Thyroid gland (tissue), 4 donors: ENCODE measurements at regions of chr17 and their contacts with region 1.

Region 1: GRCh38 chr17:31216053-31216751 is 80.8 kb downstream of the OMG start:
- DNase-seq: no peak
- H3K4me3 ChIP-seq: no peak overlapping the region
- H3K27ac ChIP-seq: peak overlapping the region in 2 of 3 donors; percentile 3 to 21
- H3K4me1 ChIP-seq: peaks cover 0 to 4% of the 10 kb centered on the region in 2 donors
- H3K27me3 ChIP-seq: no peaks in the 10 kb centered on the region
- CTCF ChIP-seq: peak; percentile 27 to 74 (median 48)
- POLR2A ChIP-seq: no peak

Region 2: GRCh38 chr17:30894236-30894635 is 322.0 kb before region 1 on chr17:
- intact Hi-C with region 1: no loop called
- DNase-seq: no peak
- H3K4me3 ChIP-seq: no peak overlapping the region
- H3K27ac ChIP-seq: no peak overlapping the region
- H3K4me1 ChIP-seq: no peaks in the 10 kb centered on the region
- H3K27me3 ChIP-seq: no peaks in the 10 kb centered on the region
- CTCF ChIP-seq: no peak
- POLR2A ChIP-seq: no peak

Region 3: DNA sequence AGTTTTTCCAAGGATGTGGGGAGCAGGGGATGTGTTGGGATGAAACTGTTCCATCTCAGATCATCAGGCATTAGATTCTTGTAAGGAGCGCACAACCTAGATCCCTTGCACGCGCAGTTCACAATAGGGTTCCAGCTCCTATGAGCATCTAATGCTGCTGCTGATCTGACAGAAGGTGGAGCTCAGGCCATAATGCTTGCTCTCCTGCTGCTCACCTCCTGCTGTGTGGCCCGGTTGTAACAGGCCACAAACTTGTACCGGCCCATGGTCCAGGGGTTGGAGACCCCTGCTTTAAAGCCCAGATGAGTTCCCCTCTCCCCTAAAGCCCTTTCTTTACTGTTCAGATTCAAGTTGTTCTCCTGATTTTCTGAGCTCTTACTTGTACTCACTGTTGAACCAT is 200.6 kb before region 1 on chr17:
- intact Hi-C with region 1: loop called (anchors 5 kb)
- DNase-seq: no peak
- H3K4me3 ChIP-seq: no peak overlapping the region
- H3K27ac ChIP-seq: no peak overlapping the region
- H3K4me1 ChIP-seq: peaks cover 0 to 4% of the 10 kb centered on the region in 2 donors
- H3K27me3 ChIP-seq: no peaks in the 10 kb centered on the region
- CTCF ChIP-seq: no peak
- POLR2A ChIP-seq: no peak

Region 4: GRCh38 chr17:31052187-31052889 is 163.9 kb before region 1 on chr17:
- intact Hi-C with region 1: no loop called
- DNase-seq: peak; percentile 4 to 11
- H3K4me3 ChIP-seq: no peak overlapping the region
- H3K27ac ChIP-seq: no peak overlapping the region
- H3K4me1 ChIP-seq: no peaks in the 10 kb centered on the region
- H3K27me3 ChIP-seq: no peaks in the 10 kb centered on the region
- CTCF ChIP-seq: no peak
- POLR2A ChIP-seq: no peak

Region 5: DNA sequence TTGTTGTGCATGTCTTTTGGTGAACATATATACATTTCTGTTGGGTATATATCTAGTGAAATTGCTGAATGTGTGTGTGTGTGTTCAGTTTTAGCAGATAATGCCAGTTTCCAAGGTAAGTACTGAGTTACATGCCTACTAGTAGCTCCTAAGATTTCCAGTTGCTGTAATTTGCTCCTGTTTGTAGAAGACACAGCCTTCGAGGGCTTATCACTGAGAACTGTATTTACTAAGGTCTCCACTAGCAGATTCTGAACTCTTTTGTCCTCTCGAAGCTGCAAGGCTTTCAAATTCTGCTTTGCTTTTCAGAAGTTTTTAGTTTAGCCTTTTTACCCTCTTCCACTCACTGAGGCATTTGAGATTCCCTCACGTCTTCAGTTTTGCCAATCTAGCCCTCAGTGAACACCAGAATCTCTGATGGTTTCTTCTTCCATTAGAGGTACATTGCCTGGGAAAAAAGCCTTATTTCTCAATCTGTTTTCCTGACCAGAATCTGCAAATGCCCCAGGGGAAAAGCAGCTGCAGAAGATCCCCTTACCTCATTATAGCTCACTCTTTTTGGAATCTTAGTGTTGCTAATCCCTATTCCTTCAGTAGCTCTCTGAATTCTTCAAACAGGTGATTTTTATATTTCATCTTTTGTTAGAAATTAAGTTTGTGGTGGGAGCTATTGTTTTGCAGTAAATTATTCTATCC is 68.5 kb before region 1 on chr17:
- intact Hi-C with region 1: no loop called
- DNase-seq: no peak
- H3K4me3 ChIP-seq: no peak overlapping the region
- H3K27ac ChIP-seq: peak overlapping the region in 1 of 3 donors; percentile 9
- H3K4me1 ChIP-seq: peaks cover 6 to 12% of the 10 kb centered on the region in 2 donors
- H3K27me3 ChIP-seq: no peaks in the 10 kb centered on the region
- CTCF ChIP-seq: no peak
- POLR2A ChIP-seq: no peak

Region 6: GRCh38 chr17:31413874-31414549 is 197.8 kb after region 1 on chr17:
- intact Hi-C with region 1: no loop called
- DNase-seq: no peak
- H3K4me3 ChIP-seq: no peak overlapping the region
- H3K27ac ChIP-seq: no peak overlapping the region
- H3K4me1 ChIP-seq: no peaks in the 10 kb centered on the region
- H3K27me3 ChIP-seq: no peaks in the 10 kb centered on the region
- CTCF ChIP-seq: no peak
- POLR2A ChIP-seq: no peak